Mammary epithelial cell (primary cell): ENCODE measurements at regions of chr10 and their contacts with region 1.

Region 1: GRCh38 chr10:97686962-97687784 is at the start of gene AVPI1:
- DNase-seq: peak; percentile 99
- H3K4me3 ChIP-seq: peak within 1 kb of the TSS; percentile 88 to 95 (median 89)
- H3K27ac ChIP-seq: peak within 1 kb of the TSS; percentile 100
- H3K4me1 ChIP-seq: peaks cover 56% of the 10 kb centered on the region
- H3K27me3 ChIP-seq: no peaks in the 10 kb centered on the region
- CTCF ChIP-seq: no peak
- total RNA-seq, gene AVPI1: 31.4 to 33.8 TPM

Region 2: GRCh38 chr10:97259119-97259518 is 428.1 kb before region 1 on chr10:
- CTCF ChIA-PET with region 1: no interaction called
- dilution Hi-C with region 1: no loop called
- in situ Hi-C with region 1: no loop called
- intact Hi-C with region 1: no loop called
- DNase-seq: no peak
- H3K4me3 ChIP-seq: no peak overlapping the region
- H3K27ac ChIP-seq: no peak overlapping the region
- H3K4me1 ChIP-seq: no peaks in the 10 kb centered on the region
- H3K27me3 ChIP-seq: no peaks in the 10 kb centered on the region
- CTCF ChIP-seq: no peak

Region 3: GRCh38 chr10:97463363-97464132 is 223.6 kb before region 1 on chr10:
- CTCF ChIA-PET with region 1: no interaction called
- dilution Hi-C with region 1: no loop called
- in situ Hi-C with region 1: no loop called
- intact Hi-C with region 1: loop called (anchors 5 kb)
- DNase-seq: peak; percentile 65
- H3K4me3 ChIP-seq: no peak overlapping the region
- H3K27ac ChIP-seq: no peak overlapping the region
- H3K4me1 ChIP-seq: peaks cover 26% of the 10 kb centered on the region
- H3K27me3 ChIP-seq: no peaks in the 10 kb centered on the region
- CTCF ChIP-seq: peak; percentile 90 to 91

Region 4: DNA sequence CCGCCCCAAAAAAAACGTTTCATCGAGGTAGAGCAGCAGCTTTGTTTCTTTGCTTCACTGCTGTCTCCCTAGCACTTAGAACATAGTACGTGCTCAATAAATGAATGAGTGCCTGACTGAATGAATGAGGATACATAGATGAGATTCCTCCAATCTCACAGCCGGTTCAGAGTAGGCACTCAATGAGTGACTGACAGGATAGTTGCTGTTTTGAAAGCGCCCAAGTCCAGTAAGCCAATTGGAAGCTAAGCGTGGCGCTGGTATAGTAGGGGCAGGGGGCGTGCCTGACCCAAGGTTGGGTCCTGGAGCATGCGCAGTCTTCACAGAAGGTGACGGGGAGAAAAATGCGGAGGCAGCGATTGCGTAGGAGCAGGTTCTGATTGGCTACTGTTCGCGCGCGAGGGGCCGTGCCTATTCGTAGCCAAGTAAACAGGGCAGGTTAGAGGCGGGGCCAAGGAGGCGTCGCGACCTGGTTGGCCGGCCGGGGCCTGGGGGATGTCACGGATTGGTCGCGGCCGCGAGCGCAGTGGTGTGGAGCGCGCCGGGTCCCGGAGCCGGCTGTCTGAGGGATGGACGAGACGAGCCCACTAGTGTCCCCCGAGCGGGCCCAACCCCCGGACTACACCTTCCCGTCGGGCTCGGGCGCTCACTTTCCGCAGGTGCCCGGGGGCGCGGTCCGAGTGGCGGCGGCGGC is 46.9 kb before region 1 on chr10 and contains the start of gene PI4K2A:
- CTCF ChIA-PET with region 1: no interaction called
- dilution Hi-C with region 1: loop called (anchors 5 kb)
- in situ Hi-C with region 1: no loop called
- intact Hi-C with region 1: no loop called
- DNase-seq: peak; percentile 99
- H3K4me3 ChIP-seq: peak within 1 kb of the TSS; percentile 87 to 96 (median 96)
- H3K27ac ChIP-seq: peak within 1 kb of the TSS; percentile 75
- H3K4me1 ChIP-seq: peaks cover 12% of the 10 kb centered on the region
- H3K27me3 ChIP-seq: no peaks in the 10 kb centered on the region
- CTCF ChIP-seq: no peak
- total RNA-seq, gene PI4K2A: 57.4 to 74.5 TPM

Region 5: GRCh38 chr10:97701438-97702069 is 14.4 kb after region 1 on chr10:
- CTCF ChIA-PET with region 1: interaction called, 17 read pairs
- dilution Hi-C with region 1: no loop called
- in situ Hi-C with region 1: no loop called
- intact Hi-C with region 1: loop called (anchors 1 kb)
- DNase-seq: peak; percentile 75
- H3K4me3 ChIP-seq: no peak overlapping the region
- H3K27ac ChIP-seq: no peak overlapping the region
- H3K4me1 ChIP-seq: peaks cover 14% of the 10 kb centered on the region
- H3K27me3 ChIP-seq: no peaks in the 10 kb centered on the region
- CTCF ChIP-seq: peak; percentile 93 to 95

Region 6: GRCh38 chr10:97861097-97861750 is 174.1 kb after region 1 on chr10:
- CTCF ChIA-PET with region 1: no interaction called
- dilution Hi-C with region 1: loop called (anchors 5 kb)
- in situ Hi-C with region 1: no loop called
- intact Hi-C with region 1: no loop called
- DNase-seq: peak; percentile 93
- H3K4me3 ChIP-seq: no peak overlapping the region
- H3K27ac ChIP-seq: no peak overlapping the region
- H3K4me1 ChIP-seq: peaks cover 10% of the 10 kb centered on the region
- H3K27me3 ChIP-seq: no peaks in the 10 kb centered on the region
- CTCF ChIP-seq: no peak

Region 7: GRCh38 chr10:97875391-97875790 is 188.2 kb after region 1 on chr10:
- CTCF ChIA-PET with region 1: no interaction called
- dilution Hi-C with region 1: no loop called
- in situ Hi-C with region 1: no loop called
- intact Hi-C with region 1: no loop called
- DNase-seq: no peak
- H3K4me3 ChIP-seq: no peak overlapping the region
- H3K27ac ChIP-seq: no peak overlapping the region
- H3K4me1 ChIP-seq: no peaks in the 10 kb centered on the region
- H3K27me3 ChIP-seq: no peaks in the 10 kb centered on the region
- CTCF ChIP-seq: no peak